Activated CD8-positive, alpha-beta T cell treated with anti-CD3 and anti-CD28 coated beads, Interleukin-2, amount 10 ng/mL, durations not matched to agents 7 days and 5 days (primary cell): ENCODE measurements at regions of chr15 and their contacts with region 1.

Region 1: DNA sequence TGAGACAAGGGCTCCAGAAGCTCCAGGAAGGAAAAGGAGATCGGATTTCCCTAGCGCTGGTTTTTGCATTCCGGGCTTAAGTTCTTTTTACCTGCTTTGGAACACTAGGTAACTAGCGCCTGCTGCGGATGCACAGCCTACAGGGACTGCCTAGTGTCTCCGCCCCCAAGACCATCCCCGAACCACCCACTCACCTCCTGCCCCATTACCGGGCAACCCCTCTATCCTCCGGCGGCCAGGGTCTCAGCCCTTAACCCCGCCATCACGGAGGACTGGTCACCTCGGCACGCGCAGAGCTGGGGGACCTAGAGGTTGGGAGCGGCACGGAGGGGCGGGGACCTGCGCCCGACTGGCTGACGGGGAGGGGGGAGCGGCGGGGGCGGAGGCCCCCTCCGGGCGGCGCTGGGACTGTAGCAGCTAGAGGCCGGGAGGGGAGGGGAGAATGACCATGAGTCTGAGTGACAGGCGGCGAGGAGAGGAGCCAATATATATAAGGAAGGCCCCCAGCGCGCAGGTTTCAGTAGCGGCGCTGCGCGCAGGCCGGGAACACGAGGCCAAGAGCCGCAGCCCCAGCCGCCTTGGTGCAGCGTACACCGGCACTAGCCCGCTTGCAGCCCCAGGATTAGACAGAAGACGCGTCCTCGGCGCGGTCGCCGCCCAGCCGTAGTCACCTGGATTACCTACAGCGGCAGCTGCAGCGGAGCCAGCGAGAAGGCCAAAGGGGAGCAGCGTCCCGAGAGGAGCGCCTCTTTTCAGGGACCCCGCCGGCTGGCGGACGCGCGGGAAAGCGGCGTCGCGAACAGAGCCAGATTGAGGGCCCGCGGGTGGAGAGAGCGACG is at the start of gene DLL4:
- DNase-seq: peak; percentile 51
- ATAC-seq: peak; percentile 53
- H3K4me3 Mint-ChIP-seq: peak within 1 kb of the TSS; percentile 50
- H3K27ac Mint-ChIP-seq: no peak within 1 kb of the TSS
- H3K4me1 Mint-ChIP-seq: peaks cover 57% of the 10 kb centered on the region
- H3K27me3 Mint-ChIP-seq: peaks cover 77% of the 10 kb centered on the region
- total RNA-seq, gene DLL4: not detected

Region 2: DNA sequence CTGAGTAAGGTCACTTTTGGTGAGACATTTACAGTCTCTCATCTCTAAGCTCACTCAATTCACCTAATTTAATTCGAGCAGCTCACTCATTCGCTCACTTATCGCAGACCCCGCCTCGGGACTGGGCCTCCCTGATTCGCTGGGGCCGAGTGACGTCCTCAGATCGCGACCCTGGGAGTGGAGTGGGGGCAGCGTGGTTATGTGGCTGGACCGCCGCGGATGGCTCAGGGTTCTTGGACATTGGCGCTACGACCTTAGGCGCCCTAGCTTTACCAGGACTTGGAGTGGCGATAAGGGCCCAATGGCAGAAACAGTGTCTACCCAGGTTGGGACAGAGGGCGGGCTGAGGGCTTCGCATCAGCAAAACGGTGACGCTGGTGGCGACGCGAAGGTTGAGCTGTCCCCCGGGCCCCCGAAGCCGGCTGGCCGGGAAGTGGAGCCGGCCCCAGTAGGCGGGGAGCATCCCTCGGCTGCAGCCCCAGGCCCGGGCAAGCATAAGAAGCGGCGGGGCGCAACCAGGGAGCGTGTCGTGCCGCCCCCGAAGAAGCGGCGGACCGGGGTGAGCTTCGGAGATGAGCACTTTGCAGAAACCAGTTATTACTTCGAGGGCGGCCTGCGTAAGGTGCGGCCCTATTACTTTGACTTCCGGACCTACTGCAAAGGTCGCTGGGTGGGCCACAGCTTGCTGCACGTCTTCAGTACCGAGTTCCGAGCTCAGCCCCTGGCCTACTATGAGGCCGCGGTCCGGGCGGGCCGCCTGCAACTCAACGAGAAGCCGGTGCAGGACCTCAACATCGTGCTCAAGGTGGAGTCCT is 359.7 kb before region 1 on chr15 and contains the start of gene RPUSD2:
- CTCF ChIA-PET with region 1: no interaction called
- POLR2A ChIA-PET with region 1: no interaction called
- DNase-seq: peak; percentile 96
- ATAC-seq: peak; percentile 69
- H3K4me3 Mint-ChIP-seq: peak within 1 kb of the TSS; percentile 97
- H3K27ac Mint-ChIP-seq: peak within 1 kb of the TSS; percentile 99
- H3K4me1 Mint-ChIP-seq: peaks cover 49% of the 10 kb centered on the region
- H3K27me3 Mint-ChIP-seq: no peaks in the 10 kb centered on the region
- total RNA-seq, gene RPUSD2: 14.1 to 15.6 TPM

Region 3: DNA sequence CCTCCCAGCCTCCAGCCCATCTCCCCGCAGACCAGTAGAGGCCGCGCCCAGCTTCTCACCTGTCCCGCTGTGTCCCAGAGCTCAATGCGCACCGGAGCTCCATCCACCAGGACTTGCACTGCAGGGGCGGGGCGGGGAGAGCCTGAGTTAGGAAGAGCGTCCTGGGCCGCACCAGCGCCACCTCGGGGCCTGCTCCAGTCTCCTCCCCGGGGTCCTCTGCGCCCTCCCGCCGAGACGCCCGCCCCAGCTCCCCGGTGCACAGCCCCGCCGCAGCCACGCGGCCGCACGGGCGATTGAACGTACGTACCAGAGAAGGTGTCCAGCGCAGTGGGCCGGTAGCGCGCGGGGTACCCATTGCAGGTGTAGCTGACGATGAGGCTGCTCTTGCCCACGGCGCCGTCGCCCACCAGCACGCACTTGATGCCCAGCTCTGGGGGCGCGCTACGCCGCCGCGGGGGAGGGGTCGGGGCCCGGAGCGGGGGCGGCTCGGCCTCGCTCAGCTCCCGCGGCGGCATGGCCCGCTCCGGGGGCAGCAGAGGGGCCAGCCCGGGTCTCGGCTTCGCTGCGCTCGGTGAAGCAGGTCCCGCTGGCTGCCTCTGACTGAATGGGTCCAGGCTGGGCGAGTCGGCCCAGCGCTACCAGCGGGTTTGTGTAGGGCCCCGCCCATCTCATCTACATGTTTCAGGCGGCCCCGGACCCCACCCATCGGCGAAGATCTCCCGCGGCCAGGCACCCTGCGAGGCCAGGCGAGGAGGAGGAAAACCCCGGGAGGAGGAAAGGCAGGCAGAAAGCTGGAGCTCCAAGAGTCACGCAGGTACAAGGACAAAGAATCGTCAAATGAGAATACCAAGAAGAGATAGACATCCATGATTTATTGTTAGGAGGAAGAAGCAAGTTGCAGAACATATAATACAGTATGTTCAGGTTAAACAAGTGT is 55.1 kb before region 1 on chr15 and contains the start of gene RHOV:
- CTCF ChIA-PET with region 1: no interaction called
- POLR2A ChIA-PET with region 1: no interaction called
- DNase-seq: peak; percentile 53
- ATAC-seq: peak; percentile 91
- H3K4me3 Mint-ChIP-seq: peak within 1 kb of the TSS; percentile 63
- H3K27ac Mint-ChIP-seq: no peak within 1 kb of the TSS
- H3K4me1 Mint-ChIP-seq: peaks cover 13% of the 10 kb centered on the region
- H3K27me3 Mint-ChIP-seq: peaks cover 29% of the 10 kb centered on the region
- total RNA-seq, gene RHOV: not detected

Region 4: GRCh38 chr15:40918146-40918798 is 10.8 kb before region 1 on chr15:
- CTCF ChIA-PET with region 1: interaction called, 11 read pairs
- POLR2A ChIA-PET with region 1: no interaction called
- DNase-seq: no peak
- ATAC-seq: no peak
- H3K4me3 Mint-ChIP-seq: no peak overlapping the region
- H3K27ac Mint-ChIP-seq: no peak overlapping the region
- H3K4me1 Mint-ChIP-seq: no peaks in the 10 kb centered on the region
- H3K27me3 Mint-ChIP-seq: no peaks in the 10 kb centered on the region

Region 5: GRCh38 chr15:40952901-40953712 is 24.1 kb after region 1 on chr15 and contains the start of gene CHAC1:
- CTCF ChIA-PET with region 1: interaction called, 15 read pairs
- POLR2A ChIA-PET with region 1: no interaction called
- DNase-seq: peak; percentile 97
- ATAC-seq: peak; percentile 94
- H3K4me3 Mint-ChIP-seq: peak within 1 kb of the TSS; percentile 91
- H3K27ac Mint-ChIP-seq: peak within 1 kb of the TSS; percentile 90
- H3K4me1 Mint-ChIP-seq: peaks cover 39% of the 10 kb centered on the region
- H3K27me3 Mint-ChIP-seq: peaks cover 4% of the 10 kb centered on the region
- total RNA-seq, gene CHAC1: 8.3 to 8.9 TPM

Region 6: GRCh38 chr15:41022487-41023090 is 93.5 kb after region 1 on chr15:
- CTCF ChIA-PET with region 1: interaction called, 13 read pairs
- POLR2A ChIA-PET with region 1: no interaction called
- DNase-seq: peak; percentile 68
- ATAC-seq: no peak
- H3K4me3 Mint-ChIP-seq: no peak overlapping the region
- H3K27ac Mint-ChIP-seq: no peak overlapping the region
- H3K4me1 Mint-ChIP-seq: peaks cover 3% of the 10 kb centered on the region
- H3K27me3 Mint-ChIP-seq: no peaks in the 10 kb centered on the region